BJ (cell line): ENCODE measurements at regions of chr2 and their contacts with region 1.

Region 1: DNA sequence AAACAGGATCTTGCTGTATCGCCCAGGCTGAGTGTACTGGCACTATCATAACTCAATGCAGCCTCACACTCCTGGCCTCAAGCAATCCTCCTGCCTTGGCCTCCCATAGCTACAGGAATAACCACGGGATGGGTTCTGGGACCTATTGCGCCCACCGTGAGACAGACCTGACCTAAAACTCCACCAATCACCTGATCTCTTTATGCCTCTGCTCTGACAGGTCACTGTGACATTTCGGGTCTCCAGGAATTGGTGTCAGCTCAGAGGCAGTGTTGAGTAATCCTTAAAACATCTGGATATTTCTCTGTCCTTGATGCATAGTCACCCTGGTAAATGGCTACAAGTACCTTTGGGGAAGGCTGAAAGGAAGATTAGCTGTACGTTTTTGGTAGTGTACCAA is 5.2 kb upstream of the MRPS5 start:
- DNase-seq: no peak
- H3K4me3 ChIP-seq: no peak overlapping the region
- H3K27me3 ChIP-seq: no peaks in the 10 kb centered on the region; the same call in 1 of the 2 replicates
- CTCF ChIP-seq: no peak

Region 2: GRCh38 chr2:95069465-95069864 is 57.3 kb before region 1 on chr2:
- CTCF ChIA-PET with region 1: no interaction called
- POLR2A ChIA-PET with region 1: no interaction called
- DNase-seq: no peak
- H3K4me3 ChIP-seq: no peak overlapping the region
- H3K27me3 ChIP-seq: peaks cover 4% of the 10 kb centered on the region
- CTCF ChIP-seq: no peak

Region 3: GRCh38 chr2:95138702-95139101 is 11.9 kb after region 1 on chr2:
- CTCF ChIA-PET with region 1: no interaction called
- POLR2A ChIA-PET with region 1: interaction called, 10 read pairs
- DNase-seq: no peak
- H3K4me3 ChIP-seq: no peak overlapping the region
- H3K27me3 ChIP-seq: no peaks in the 10 kb centered on the region
- CTCF ChIP-seq: no peak